ENCODE measurements at regions of chr12 and their contacts with region 1.

Region 1: DNA sequence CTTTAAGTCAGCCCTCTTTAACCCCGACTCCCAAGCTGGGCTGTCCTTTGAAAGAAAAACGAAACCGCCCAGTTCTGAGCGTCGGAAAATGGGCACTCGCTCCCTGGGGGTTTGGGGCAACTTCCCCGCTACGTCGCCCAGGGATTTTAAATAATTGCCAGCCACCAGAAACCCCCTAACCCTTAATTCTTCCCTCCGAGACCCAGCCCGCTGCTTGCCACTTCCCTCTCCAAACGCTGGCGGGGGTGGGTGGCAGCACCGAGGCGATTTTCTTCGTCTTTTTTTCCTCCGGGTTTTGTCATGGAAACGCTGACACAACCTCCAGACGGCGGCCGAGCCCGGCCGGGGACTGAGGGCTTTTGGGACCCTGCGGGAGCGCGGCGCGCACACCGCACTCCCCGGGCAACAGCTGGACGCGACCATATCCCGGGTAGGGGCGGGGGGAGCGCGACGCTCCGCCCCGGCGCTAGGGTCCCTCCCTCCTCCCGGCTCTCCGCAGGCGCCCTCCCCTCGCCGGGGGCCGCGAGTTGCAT is at the start of gene CHST11:
- DNase-seq: peak in 8 of 9 donors; percentile 33 to 84 (median 60)
- ATAC-seq: peak; percentile 83
- H3K4me3 ChIP-seq: peak within 1 kb of the TSS; percentile 83
- H3K4me3 Mint-ChIP-seq: peak within 1 kb of the TSS; percentile 75 to 100 (median 99)
- H3K27ac ChIP-seq: peak within 1 kb of the TSS; percentile 85
- H3K27ac Mint-ChIP-seq: peak within 1 kb of the TSS; percentile 84 to 99 (median 95)
- H3K4me1 ChIP-seq: peaks cover 25% of the 10 kb centered on the region in 2 donors
- H3K4me1 Mint-ChIP-seq: peaks cover 19 to 47% (median 36%) of the 10 kb centered on the region in 7 donors
- H3K27me3 ChIP-seq: no peaks in the 10 kb centered on the region
- H3K27me3 Mint-ChIP-seq: peaks cover 0 to 7% (median 0%) of the 10 kb centered on the region in 5 donors
- total RNA-seq, gene CHST11: 31.9 to 74.3 (median 42.0) TPM

Region 2: DNA sequence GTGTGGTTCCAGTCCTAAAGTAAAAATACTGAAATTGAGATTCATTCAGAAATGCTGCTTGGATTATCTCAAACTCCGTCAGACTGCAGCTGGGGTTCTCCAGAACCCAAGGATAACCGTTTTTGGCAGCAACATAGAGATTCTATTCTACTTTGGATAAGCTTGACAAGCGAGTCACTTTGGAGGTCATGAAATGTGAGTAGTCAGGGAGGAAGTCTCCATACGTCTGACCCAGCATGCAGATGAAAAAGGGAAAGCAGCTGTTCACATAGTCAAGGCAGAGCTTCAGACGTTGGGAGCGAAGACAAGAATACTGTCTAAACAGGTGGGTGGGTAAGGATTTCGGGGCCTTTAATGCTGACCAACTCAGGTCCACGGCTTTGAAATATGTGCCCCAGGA is 541.2 kb before region 1 on chr12:
- CTCF ChIA-PET with region 1: no interaction called
- POLR2A ChIA-PET with region 1: no interaction called
- intact Hi-C with region 1: no loop called
- DNase-seq: no peak
- ATAC-seq: no peak
- H3K4me3 ChIP-seq: no peak overlapping the region
- H3K4me3 Mint-ChIP-seq: no peak overlapping the region
- H3K27ac ChIP-seq: no peak overlapping the region
- H3K27ac Mint-ChIP-seq: no peak overlapping the region
- H3K4me1 ChIP-seq: no peaks in the 10 kb centered on the region
- H3K4me1 Mint-ChIP-seq: peaks cover 0 to 3% (median 0%) of the 10 kb centered on the region in 7 donors
- H3K27me3 ChIP-seq: no peaks in the 10 kb centered on the region
- H3K27me3 Mint-ChIP-seq: peaks cover 0 to 10% (median 0%) of the 10 kb centered on the region in 5 donors

Region 3: DNA sequence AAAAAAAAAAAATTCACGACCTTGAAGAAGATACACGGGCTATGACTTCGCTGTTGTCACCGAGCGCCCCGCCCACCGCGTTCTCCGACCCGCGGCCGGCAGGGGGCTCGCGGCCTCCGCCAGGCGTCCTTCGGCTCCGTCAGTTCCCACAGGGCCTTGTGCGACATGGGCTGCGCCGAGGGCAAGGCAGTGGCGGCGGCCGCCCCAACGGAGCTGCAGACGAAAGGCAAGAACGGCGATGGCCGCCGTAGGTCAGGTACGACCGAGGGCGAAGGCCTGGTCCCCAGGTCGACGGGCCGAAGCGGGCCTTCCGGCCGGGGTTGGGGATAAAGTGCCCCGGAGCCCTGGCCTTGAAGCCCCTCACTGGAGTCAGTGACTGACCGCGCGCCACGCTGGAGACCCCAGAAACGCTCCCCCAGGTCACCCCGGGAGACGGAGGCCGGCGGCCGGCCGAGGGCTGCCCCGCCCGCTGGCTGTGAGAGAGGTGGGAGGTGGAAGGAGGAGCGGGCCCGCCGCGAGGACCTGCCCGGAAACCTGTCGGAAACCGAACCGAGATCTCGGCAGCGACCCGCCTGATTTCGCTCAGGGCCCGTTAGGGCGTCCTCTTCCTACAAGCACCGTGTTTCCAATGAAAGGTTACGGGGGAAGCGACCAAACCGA is 240.7 kb before region 1 on chr12 and contains the start of gene TXNRD1:
- CTCF ChIA-PET with region 1: no interaction called
- POLR2A ChIA-PET with region 1: no interaction called
- intact Hi-C with region 1: loop called in 1 of 2 experiments (anchors 5 kb)
- DNase-seq: peak; percentile 70 to 84 (median 81)
- ATAC-seq: peak; percentile 97
- H3K4me3 ChIP-seq: peak within 1 kb of the TSS; percentile 69
- H3K4me3 Mint-ChIP-seq: peak within 1 kb of the TSS; percentile 79 to 89 (median 84)
- H3K27ac ChIP-seq: peak within 1 kb of the TSS; percentile 64
- H3K27ac Mint-ChIP-seq: peak within 1 kb of the TSS; percentile 64 to 86 (median 72)
- H3K4me1 ChIP-seq: peaks cover 0 to 5% of the 10 kb centered on the region in 2 donors
- H3K4me1 Mint-ChIP-seq: peaks cover 15 to 41% (median 26%) of the 10 kb centered on the region in 7 donors
- H3K27me3 ChIP-seq: no peaks in the 10 kb centered on the region
- H3K27me3 Mint-ChIP-seq: peaks cover 0 to 8% (median 0%) of the 10 kb centered on the region in 5 donors
- total RNA-seq, gene TXNRD1: 19.1 to 73.5 (median 41.7) TPM

Region 4: DNA sequence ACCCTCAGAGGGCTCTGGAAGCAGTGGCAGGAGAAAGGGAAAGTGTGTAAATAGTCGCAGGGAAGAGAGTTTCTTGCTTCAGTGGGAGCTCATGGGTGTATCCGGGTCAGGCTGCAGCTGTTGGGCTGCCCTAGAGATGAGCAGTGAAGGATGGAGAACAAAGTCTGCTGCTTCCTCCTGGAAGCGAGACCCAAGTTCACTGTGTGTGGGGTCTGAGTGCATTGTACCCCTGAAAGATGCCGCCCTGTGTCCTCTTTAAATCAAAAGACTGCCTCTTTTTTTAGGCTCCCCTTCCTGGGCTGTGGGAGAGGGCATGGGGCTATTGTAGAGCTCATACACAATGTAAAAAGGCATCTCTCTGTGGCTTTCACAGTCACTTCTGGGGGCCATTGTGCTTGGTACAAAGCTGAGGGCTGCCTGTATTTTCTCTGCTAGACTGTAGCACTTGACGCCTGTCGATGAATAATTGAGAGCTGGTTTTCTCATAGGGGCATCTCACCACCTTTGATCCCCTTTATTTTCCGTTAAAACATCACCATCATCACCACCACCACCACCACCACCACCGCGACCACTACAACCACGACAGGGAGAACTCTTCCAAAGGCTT is 17.0 kb after region 1 on chr12:
- CTCF ChIA-PET with region 1: interaction called, 13 read pairs
- POLR2A ChIA-PET with region 1: interaction called, 20 read pairs
- intact Hi-C with region 1: no loop called
- DNase-seq: no peak
- ATAC-seq: peak; percentile 51
- H3K4me3 ChIP-seq: peak overlapping the region; percentile 14
- H3K4me3 Mint-ChIP-seq: peak overlapping the region; percentile 10 to 72 (median 52)
- H3K27ac ChIP-seq: no peak overlapping the region
- H3K27ac Mint-ChIP-seq: peak overlapping the region; percentile 46 to 91 (median 76)
- H3K4me1 ChIP-seq: peaks cover 44 to 59% of the 10 kb centered on the region in 2 donors
- H3K4me1 Mint-ChIP-seq: peaks cover 60 to 86% (median 82%) of the 10 kb centered on the region in 7 donors
- H3K27me3 ChIP-seq: no peaks in the 10 kb centered on the region
- H3K27me3 Mint-ChIP-seq: no peaks in the 10 kb centered on the region

Region 5: DNA sequence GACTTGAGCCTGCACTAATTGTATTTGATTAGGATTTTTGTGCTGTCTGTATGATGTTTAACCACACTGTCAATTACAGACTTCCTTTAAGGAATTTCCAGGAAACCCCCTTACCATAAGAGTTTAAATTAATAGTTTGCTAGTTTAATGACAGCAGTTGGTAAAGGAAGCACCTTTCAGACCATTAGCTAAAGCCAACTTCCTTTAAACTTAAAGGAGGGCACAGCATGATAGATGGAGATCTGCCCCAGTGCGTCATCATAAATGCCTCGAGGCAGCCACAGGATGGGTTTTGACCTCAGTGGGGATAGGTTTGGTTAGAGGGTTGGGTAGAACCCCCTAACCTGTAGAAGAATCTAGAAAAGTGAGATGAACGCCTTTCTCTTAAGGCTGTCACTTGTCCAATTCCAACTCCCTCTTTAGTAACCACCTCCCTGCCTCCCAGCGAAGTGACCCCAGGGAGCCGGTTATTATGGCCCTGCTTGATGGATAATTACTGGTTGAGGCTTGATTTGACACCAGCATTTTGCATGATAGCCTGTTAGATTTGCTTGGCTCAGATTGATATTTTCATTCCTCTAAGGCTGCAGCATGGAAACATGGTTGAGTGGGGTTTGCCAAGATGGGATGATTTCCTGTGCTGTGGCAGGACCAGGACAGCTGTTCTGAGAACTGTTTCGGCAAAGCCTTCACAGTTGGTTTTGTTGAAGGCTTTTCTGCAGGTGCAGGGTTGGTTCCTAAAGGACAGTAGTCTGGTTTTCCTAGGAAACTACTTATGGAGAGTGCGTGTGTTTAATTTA is 62.9 kb after region 1 on chr12:
- CTCF ChIA-PET with region 1: no interaction called
- POLR2A ChIA-PET with region 1: no interaction called
- intact Hi-C with region 1: loop called in 1 of 2 experiments (anchors 2 kb)
- DNase-seq: no peak
- ATAC-seq: peak; percentile 86
- H3K4me3 ChIP-seq: no peak overlapping the region
- H3K4me3 Mint-ChIP-seq: peak overlapping the region in 2 of 10 donors; percentile 42 to 50
- H3K27ac ChIP-seq: no peak overlapping the region
- H3K27ac Mint-ChIP-seq: peak overlapping the region in 5 of 9 donors; percentile 22 to 62 (median 37)
- H3K4me1 ChIP-seq: peaks cover 25 to 41% of the 10 kb centered on the region in 2 donors
- H3K4me1 Mint-ChIP-seq: peaks cover 63 to 96% (median 86%) of the 10 kb centered on the region in 7 donors
- H3K27me3 ChIP-seq: no peaks in the 10 kb centered on the region
- H3K27me3 Mint-ChIP-seq: no peaks in the 10 kb centered on the region

Region 6: GRCh38 chr12:104604070-104604994 is 147.8 kb after region 1 on chr12:
- CTCF ChIA-PET with region 1: no interaction called
- POLR2A ChIA-PET with region 1: no interaction called
- intact Hi-C with region 1: loop called (anchors 1 to 5 kb)
- DNase-seq: peak in 5 of 9 donors; percentile 7 to 54 (median 13)
- ATAC-seq: peak; percentile 82
- H3K4me3 ChIP-seq: no peak overlapping the region
- H3K4me3 Mint-ChIP-seq: peak overlapping the region in 4 of 10 donors; percentile 23 to 66 (median 28)
- H3K27ac ChIP-seq: no peak overlapping the region
- H3K27ac Mint-ChIP-seq: peak overlapping the region in 8 of 9 donors; percentile 15 to 91 (median 43)
- H3K4me1 ChIP-seq: peaks cover 10 to 16% of the 10 kb centered on the region in 2 donors
- H3K4me1 Mint-ChIP-seq: peaks cover 37 to 79% (median 64%) of the 10 kb centered on the region in 7 donors
- H3K27me3 ChIP-seq: no peaks in the 10 kb centered on the region
- H3K27me3 Mint-ChIP-seq: no peaks in the 10 kb centered on the region

Region 7: DNA sequence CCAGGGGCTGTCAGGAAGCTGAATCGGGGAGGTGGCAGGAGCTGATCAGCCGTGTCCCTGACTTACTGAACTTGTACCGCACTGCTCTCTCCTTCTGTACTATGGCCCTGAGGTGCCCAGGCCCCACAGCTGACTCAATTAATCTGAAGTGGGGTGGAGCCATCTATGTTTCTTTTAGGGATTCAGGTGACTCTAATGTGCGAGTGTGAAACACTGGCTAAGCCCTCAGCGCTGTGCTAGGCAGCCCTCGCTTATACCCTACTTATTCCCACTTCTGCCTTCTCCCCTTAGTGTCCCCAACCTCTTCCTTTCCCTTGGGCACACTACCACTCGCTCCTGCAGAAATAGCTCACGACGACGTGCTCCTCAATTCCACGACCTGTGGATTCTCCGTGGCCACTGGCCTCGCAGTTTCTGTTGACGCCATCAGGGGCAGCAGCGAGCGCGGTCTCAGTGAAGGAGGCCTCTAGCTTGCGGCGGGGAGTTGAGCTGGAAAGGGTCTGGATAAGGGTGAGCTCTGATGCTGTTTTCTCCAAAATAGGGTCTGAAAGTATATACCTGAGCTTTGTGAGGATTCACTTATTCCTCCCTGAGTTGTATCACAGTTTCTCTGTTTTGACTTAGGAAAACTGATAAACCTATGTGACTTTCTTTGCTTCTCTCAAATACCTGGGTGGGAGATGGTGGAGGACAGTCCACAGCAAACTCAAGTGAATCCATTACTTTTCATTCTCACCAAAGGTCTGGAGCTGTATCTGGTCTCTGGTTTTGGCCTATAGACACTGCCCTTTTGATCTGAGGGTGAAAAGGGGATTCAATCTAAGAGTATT is 334.0 kb after region 1 on chr12:
- CTCF ChIA-PET with region 1: no interaction called
- POLR2A ChIA-PET with region 1: no interaction called
- intact Hi-C with region 1: loop called in 1 of 2 experiments (anchors 2 kb)
- DNase-seq: peak in 7 of 9 donors; percentile 22 to 48 (median 33)
- ATAC-seq: peak; percentile 65
- H3K4me3 ChIP-seq: no peak overlapping the region
- H3K4me3 Mint-ChIP-seq: peak overlapping the region in 6 of 10 donors; percentile 3 to 66 (median 19)
- H3K27ac ChIP-seq: no peak overlapping the region
- H3K27ac Mint-ChIP-seq: peak overlapping the region in 1 of 9 donors; percentile 1
- H3K4me1 ChIP-seq: no peaks in the 10 kb centered on the region
- H3K4me1 Mint-ChIP-seq: peaks cover 0 to 7% (median 4%) of the 10 kb centered on the region in 7 donors
- H3K27me3 ChIP-seq: peaks cover 0 to 4% of the 10 kb centered on the region in 2 donors
- H3K27me3 Mint-ChIP-seq: peaks cover 0 to 3% (median 0%) of the 10 kb centered on the region in 5 donors